AG04449 (cell line): ENCODE measurements at regions of chr14 and their contacts with region 1.

Region 1: GRCh38 chr14:95431199-95432143 is 85.0 kb downstream of the SYNE3 start:
- DNase-seq: no peak
- H3K4me3 ChIP-seq: no peak overlapping the region
- CTCF ChIP-seq: peak; percentile 42

Region 2: GRCh38 chr14:95307402-95308062 is 123.9 kb before region 1 on chr14:
- CTCF ChIA-PET with region 1: no interaction called
- POLR2A ChIA-PET with region 1: no interaction called
- DNase-seq: no peak
- H3K4me3 ChIP-seq: no peak overlapping the region
- CTCF ChIP-seq: no peak

Region 3: GRCh38 chr14:95452176-95452892 is 20.9 kb after region 1 on chr14:
- CTCF ChIA-PET with region 1: interaction called, 17 read pairs
- POLR2A ChIA-PET with region 1: no interaction called
- DNase-seq: no peak
- H3K4me3 ChIP-seq: no peak overlapping the region
- CTCF ChIP-seq: peak; percentile 46

Region 4: GRCh38 chr14:95495538-95496025 is 64.1 kb after region 1 on chr14:
- CTCF ChIA-PET with region 1: no interaction called
- POLR2A ChIA-PET with region 1: no interaction called
- DNase-seq: no peak
- H3K4me3 ChIP-seq: no peak overlapping the region
- CTCF ChIP-seq: no peak